ENCODE measurements at regions of chr9 and their contacts with region 1.

Region 1: GRCh38 chr9:72627956-72628540 is 106.6 kb downstream of the TMC1 start:
- DNase-seq: no peak
- ATAC-seq: no peak
- H3K4me3 ChIP-seq: no peak overlapping the region
- H3K27ac ChIP-seq: no peak overlapping the region
- H3K4me1 ChIP-seq: no peaks in the 10 kb centered on the region
- H3K27me3 ChIP-seq: 0 out of 2 replicates have a peak, but pooled peaks cover 4% of the 10 kb centered on the region
- CTCF ChIP-seq: no peak
- POLR2A ChIP-seq: no peak
- RAD21 ChIP-seq: no peak

Region 2: GRCh38 chr9:72646061-72646460 is 18.0 kb after region 1 on chr9:
- CTCF ChIA-PET with region 1: no interaction called
- POLR2A ChIA-PET with region 1: no interaction called
- dilution Hi-C with region 1: no loop called
- in situ Hi-C with region 1: no loop called
- intact Hi-C with region 1: loop called (anchors 2 kb)
- DNase-seq: no peak
- ATAC-seq: no peak
- H3K4me3 ChIP-seq: no peak overlapping the region
- H3K27ac ChIP-seq: no peak overlapping the region
- H3K4me1 ChIP-seq: no peaks in the 10 kb centered on the region
- H3K27me3 ChIP-seq: peaks cover 8% of the 10 kb centered on the region; the same call in 1 of the 2 replicates
- CTCF ChIP-seq: no peak
- POLR2A ChIP-seq: no peak
- RAD21 ChIP-seq: no peak

Measured in IMR-90 (cell line).